ENCODE measurements at regions of chr22 and their contacts with region 1.

Region 1: DNA sequence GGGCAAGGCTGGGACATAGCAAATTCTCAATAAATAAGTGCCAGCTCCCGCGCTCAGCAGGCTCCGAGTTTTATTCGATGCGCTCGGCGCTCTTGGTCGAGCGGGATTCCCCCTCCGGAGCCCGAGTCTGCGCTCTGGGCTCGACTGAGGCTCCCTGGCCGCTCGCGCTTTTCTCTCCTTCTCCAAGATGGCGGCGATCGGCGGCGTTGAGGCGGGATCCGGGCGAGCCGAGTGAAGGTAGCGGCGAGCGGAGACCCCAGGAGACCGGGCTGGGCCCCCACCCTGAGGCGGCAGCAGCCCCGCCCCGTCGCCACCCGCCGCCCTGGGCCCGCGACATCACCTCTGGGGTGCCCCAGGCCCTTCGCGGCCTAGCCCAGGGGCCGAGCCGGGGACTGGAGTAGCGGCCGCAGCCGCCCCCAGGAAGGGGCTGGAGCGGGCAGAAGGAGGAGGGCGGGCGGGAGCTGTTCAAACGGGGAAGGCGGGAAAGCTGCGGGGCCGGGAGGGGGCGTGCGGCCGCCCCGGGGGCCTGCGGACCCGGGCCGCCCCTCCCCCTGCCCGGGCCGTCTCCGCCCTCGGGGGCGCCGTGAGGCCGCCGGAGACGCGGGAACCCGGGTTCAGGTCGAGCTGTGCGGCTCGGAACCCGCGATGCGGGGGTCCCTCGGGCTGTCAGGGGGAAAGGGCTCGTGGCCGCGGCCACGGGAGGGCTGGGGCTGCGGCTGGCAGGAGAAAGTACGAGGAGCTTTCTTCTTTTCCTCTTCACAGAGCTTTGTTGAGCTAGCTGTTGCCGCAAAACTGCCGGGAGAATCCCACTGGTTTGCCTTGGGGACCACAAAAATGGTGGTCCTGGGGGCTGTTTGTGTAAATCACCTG is at the start of gene HMGXB4:
- DNase-seq: peak; percentile 91
- ATAC-seq: peak; percentile 94
- H3K4me3 Mint-ChIP-seq: peak within 1 kb of the TSS; percentile 94
- H3K27ac Mint-ChIP-seq: peak within 1 kb of the TSS; percentile 96
- H3K4me1 Mint-ChIP-seq: peaks cover 29% of the 10 kb centered on the region
- H3K27me3 Mint-ChIP-seq: peaks cover 2% of the 10 kb centered on the region
- total RNA-seq, gene HMGXB4: 34.0 to 36.0 TPM

Region 2: GRCh38 chr22:35231585-35232084 is 25.9 kb before region 1 on chr22:
- CTCF ChIA-PET with region 1: interaction called, 10 read pairs
- POLR2A ChIA-PET with region 1: no interaction called
- DNase-seq: peak; percentile 81
- ATAC-seq: peak; percentile 84
- H3K4me3 Mint-ChIP-seq: no peak overlapping the region
- H3K27ac Mint-ChIP-seq: no peak overlapping the region
- H3K4me1 Mint-ChIP-seq: peaks cover 12% of the 10 kb centered on the region
- H3K27me3 Mint-ChIP-seq: peaks cover 18% of the 10 kb centered on the region

Region 3: GRCh38 chr22:35288116-35288515 is 30.6 kb after region 1 on chr22:
- CTCF ChIA-PET with region 1: no interaction called
- POLR2A ChIA-PET with region 1: no interaction called
- DNase-seq: no peak
- ATAC-seq: no peak
- H3K4me3 Mint-ChIP-seq: no peak overlapping the region
- H3K27ac Mint-ChIP-seq: no peak overlapping the region
- H3K4me1 Mint-ChIP-seq: peaks cover 5% of the 10 kb centered on the region
- H3K27me3 Mint-ChIP-seq: no peaks in the 10 kb centered on the region

Region 4: GRCh38 chr22:35299673-35300497 is 42.3 kb after region 1 on chr22 and contains the start of gene TOM1:
- CTCF ChIA-PET with region 1: interaction called, 5 read pairs
- POLR2A ChIA-PET with region 1: interaction called, 23 read pairs
- DNase-seq: peak; percentile 96
- ATAC-seq: peak; percentile 97
- H3K4me3 Mint-ChIP-seq: peak within 1 kb of the TSS; percentile 88
- H3K27ac Mint-ChIP-seq: peak within 1 kb of the TSS; percentile 93
- H3K4me1 Mint-ChIP-seq: peaks cover 23% of the 10 kb centered on the region
- H3K27me3 Mint-ChIP-seq: no peaks in the 10 kb centered on the region
- total RNA-seq, gene TOM1: 17.8 to 22.3 TPM